ENCODE measurements at regions of chr21 and their contacts with region 1.

Region 1: GRCh38 chr21:37032877-37033471 is 26.5 kb downstream of the RIPPLY3 start:
- DNase-seq: peak; percentile 92
- ATAC-seq: peak; percentile 96
- H3K4me3 ChIP-seq: no peak overlapping the region
- H3K27ac ChIP-seq: 0 out of 2 replicates have a peak overlapping the region, but pooled peaks have one; percentile 17
- H3K4me1 ChIP-seq: peaks cover 11% of the 10 kb centered on the region
- H3K27me3 ChIP-seq: no peaks in the 10 kb centered on the region
- CTCF ChIP-seq: no peak

Region 2: GRCh38 chr21:37009740-37010341 is 23.1 kb before region 1 on chr21:
- CTCF ChIA-PET with region 1: no interaction called
- POLR2A ChIA-PET with region 1: no interaction called
- intact Hi-C with region 1: no loop called
- DNase-seq: peak; percentile 93
- ATAC-seq: peak; percentile 95
- H3K4me3 ChIP-seq: peak overlapping the region; percentile 76
- H3K27ac ChIP-seq: no peak overlapping the region
- H3K4me1 ChIP-seq: peaks cover 13% of the 10 kb centered on the region; the same call in 1 of the 2 replicates
- H3K27me3 ChIP-seq: no peaks in the 10 kb centered on the region
- CTCF ChIP-seq: peak; percentile 92

Region 3: DNA sequence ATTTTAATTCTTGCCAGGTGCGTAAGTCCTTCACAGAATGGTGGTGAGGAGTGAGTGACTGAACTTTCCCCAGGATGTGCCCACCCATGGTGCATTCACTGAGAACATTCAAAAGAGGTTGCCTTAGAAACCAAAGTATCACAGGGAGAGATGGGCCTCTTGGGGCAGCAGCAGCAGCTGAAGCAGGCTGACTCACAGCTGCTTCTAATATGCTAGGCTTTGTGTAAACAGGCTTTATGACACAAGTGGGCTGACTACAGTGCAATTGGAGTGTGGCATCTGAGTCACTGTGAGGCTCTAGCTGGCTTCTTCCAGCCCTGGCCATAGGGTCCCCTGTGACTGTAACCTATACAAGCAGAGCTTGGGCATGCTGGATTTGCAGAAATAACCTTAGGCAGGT is 27.3 kb after region 1 on chr21:
- CTCF ChIA-PET with region 1: no interaction called
- POLR2A ChIA-PET with region 1: no interaction called
- intact Hi-C with region 1: loop called (anchors 1 kb)
- DNase-seq: peak; percentile 97
- ATAC-seq: peak; percentile 100
- H3K4me3 ChIP-seq: no peak overlapping the region
- H3K27ac ChIP-seq: peak overlapping the region; percentile 68
- H3K4me1 ChIP-seq: peaks cover 16% of the 10 kb centered on the region
- H3K27me3 ChIP-seq: no peaks in the 10 kb centered on the region
- CTCF ChIP-seq: peak; percentile 34; the same call in 1 of the 2 replicates

Region 4: GRCh38 chr21:37072988-37073416 is 40.0 kb after region 1 on chr21 and contains the starts of genes PIGP and TTC3:
- CTCF ChIA-PET with region 1: no interaction called
- POLR2A ChIA-PET with region 1: no interaction called
- intact Hi-C with region 1: loop called (anchors 1 kb)
- DNase-seq: peak; percentile 96
- ATAC-seq: peak; percentile 74
- H3K4me3 ChIP-seq: peak within 1 kb of the TSS; percentile 84
- H3K27ac ChIP-seq: peak within 1 kb of the TSS; percentile 81
- H3K4me1 ChIP-seq: peaks cover 21% of the 10 kb centered on the region
- H3K27me3 ChIP-seq: no peaks in the 10 kb centered on the region
- CTCF ChIP-seq: no peak
- total RNA-seq, gene PIGP: 17.1 and 20.1 TPM in 2 replicates
- total RNA-seq, gene TTC3: 121 and 140 TPM in 2 replicates

Measured in PC-3 (cell line).